CD4-positive, alpha-beta memory T cell (primary cell): ENCODE measurements at regions of chr20 and their contacts with region 1.

Region 1: DNA sequence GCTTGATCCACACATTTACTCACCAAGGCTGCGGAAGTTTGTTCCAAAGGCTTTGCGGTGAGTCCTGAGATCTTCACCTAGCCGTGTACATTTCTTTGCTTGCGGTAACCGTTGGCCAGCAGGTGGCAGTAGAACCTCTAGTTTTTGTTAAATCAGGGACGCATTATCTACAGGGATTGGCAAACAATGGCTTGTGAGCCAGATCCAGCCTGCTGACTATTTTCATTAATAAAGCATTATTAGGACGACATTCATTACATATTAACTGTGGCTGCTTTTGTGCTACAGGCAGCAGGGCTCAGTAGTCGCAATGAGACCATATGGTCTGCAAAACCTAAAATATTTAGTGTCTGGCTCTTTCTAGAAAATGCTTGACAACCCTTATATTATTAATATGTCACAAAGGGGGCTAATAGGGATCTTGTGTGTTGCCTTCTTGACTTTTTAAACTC is 174.1 kb downstream of the DOK5 start:
- DNase-seq: peak; percentile 20 to 51 (median 23)
- H3K4me3 ChIP-seq: no peak overlapping the region
- H3K4me3 Mint-ChIP-seq: no peak overlapping the region
- H3K27ac ChIP-seq: no peak overlapping the region
- H3K27ac Mint-ChIP-seq: no peak overlapping the region
- H3K4me1 ChIP-seq: no peaks in the 10 kb centered on the region
- H3K4me1 Mint-ChIP-seq: no peaks in the 10 kb centered on the region
- H3K27me3 ChIP-seq: no peaks in the 10 kb centered on the region
- H3K27me3 Mint-ChIP-seq: peaks cover 3% of the 10 kb centered on the region in 2 donors

Region 2: DNA sequence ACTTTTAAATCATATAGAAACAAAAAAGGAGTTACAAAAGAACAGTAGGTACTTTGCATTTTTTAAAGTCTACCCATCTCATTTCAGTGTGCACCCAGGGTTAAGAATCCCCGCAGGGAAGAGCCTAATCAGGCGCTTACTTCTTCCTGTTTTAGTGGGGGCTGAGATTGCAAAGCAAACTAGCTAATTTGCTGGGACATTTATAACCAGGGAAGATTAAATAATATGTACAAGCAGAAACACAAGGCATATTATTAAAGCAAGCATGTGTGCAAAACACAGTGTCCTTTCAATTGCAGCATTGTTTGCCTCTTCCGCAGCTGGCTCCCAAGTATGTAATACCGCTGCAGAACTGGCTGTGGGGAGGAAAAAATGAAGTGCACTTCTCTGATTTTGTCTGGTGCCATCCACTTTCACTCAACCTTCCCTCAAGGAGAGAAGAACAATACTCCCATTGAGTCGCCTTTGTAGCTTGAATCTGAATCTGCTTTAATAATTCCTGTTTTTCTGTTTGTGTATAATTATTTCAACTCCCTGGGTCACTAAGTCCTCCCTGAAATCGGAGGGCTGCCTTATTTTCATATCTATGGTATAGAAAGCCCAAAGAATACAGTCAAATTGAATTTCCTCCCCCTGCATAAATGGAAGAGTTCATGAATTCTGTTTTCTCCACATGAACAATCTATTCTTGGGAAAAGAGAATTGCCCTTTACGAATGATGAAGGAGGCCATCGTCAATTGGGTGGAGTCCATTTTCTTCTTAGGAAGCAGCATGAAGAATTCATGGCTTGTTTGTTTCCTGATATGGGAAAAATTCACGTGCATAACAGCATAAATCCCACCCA is 555.9 kb before region 1 on chr20:
- CTCF ChIA-PET with region 1: interaction called, 16 read pairs
- POLR2A ChIA-PET with region 1: no interaction called
- intact Hi-C with region 1: no loop called
- DNase-seq: no peak
- H3K4me3 ChIP-seq: no peak overlapping the region
- H3K4me3 Mint-ChIP-seq: no peak overlapping the region
- H3K27ac ChIP-seq: no peak overlapping the region
- H3K27ac Mint-ChIP-seq: no peak overlapping the region
- H3K4me1 ChIP-seq: no peaks in the 10 kb centered on the region
- H3K4me1 Mint-ChIP-seq: peaks cover 0 to 5% (median 1%) of the 10 kb centered on the region in 4 donors
- H3K27me3 ChIP-seq: no peaks in the 10 kb centered on the region
- H3K27me3 Mint-ChIP-seq: peaks cover 5 to 7% of the 10 kb centered on the region in 2 donors

Region 3: GRCh38 chr20:54219751-54220426 is 429.6 kb before region 1 on chr20:
- CTCF ChIA-PET with region 1: no interaction called
- POLR2A ChIA-PET with region 1: no interaction called
- intact Hi-C with region 1: loop called (anchors 2 kb)
- DNase-seq: no peak
- H3K4me3 ChIP-seq: no peak overlapping the region
- H3K4me3 Mint-ChIP-seq: no peak overlapping the region
- H3K27ac ChIP-seq: no peak overlapping the region
- H3K27ac Mint-ChIP-seq: peak overlapping the region in 1 of 7 donors; percentile 66
- H3K4me1 ChIP-seq: peaks cover 16% of the 10 kb centered on the region
- H3K4me1 Mint-ChIP-seq: peaks cover 11 to 23% (median 17%) of the 10 kb centered on the region in 4 donors
- H3K27me3 ChIP-seq: no peaks in the 10 kb centered on the region
- H3K27me3 Mint-ChIP-seq: no peaks in the 10 kb centered on the region

Region 4: GRCh38 chr20:54661880-54662465 is 12.4 kb after region 1 on chr20:
- CTCF ChIA-PET with region 1: interaction called, 15 read pairs
- POLR2A ChIA-PET with region 1: no interaction called
- intact Hi-C with region 1: no loop called
- DNase-seq: no peak
- H3K4me3 ChIP-seq: no peak overlapping the region
- H3K4me3 Mint-ChIP-seq: no peak overlapping the region
- H3K27ac ChIP-seq: no peak overlapping the region
- H3K27ac Mint-ChIP-seq: no peak overlapping the region
- H3K4me1 ChIP-seq: no peaks in the 10 kb centered on the region
- H3K4me1 Mint-ChIP-seq: no peaks in the 10 kb centered on the region
- H3K27me3 ChIP-seq: no peaks in the 10 kb centered on the region
- H3K27me3 Mint-ChIP-seq: peaks cover 11 to 12% of the 10 kb centered on the region in 2 donors